ENCODE measurements at regions of chr2 and their contacts with region 1.

Region 1: GRCh38 chr2:221529943-221530652 is 42.0 kb downstream of the EPHA4 start:
- DNase-seq: no peak
- ATAC-seq: peak in 1 of 2 donors; percentile 20

Region 2: DNA sequence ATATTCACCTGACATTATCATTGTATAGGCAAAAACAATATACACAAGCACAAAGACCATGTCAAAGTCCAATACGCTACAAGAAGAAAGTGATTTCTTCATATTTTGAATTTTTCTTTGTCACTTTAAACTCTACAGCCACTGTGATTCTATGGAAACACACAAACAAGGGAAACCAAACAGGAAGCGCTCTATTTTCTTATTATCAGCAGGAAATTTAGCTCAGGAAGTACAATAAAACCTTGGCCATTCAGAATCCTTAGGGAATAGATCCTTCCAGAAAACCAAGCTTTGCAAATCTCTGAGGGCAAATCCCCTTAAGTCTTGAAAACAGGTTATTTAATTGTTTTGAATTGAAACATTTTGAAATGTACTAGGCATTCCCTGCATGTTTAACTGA is 294.2 kb before region 1 on chr2:
- intact Hi-C with region 1: loop called in 1 of 2 experiments (anchors 10 kb)
- DNase-seq: no peak
- ATAC-seq: peak in 1 of 2 donors; percentile 27